ENCODE measurements at regions of chr1 and their contacts with region 1.

Region 1: GRCh38 chr1:11355559-11356475 is 82.8 kb downstream of the UBIAD1 start:
- DNase-seq: peak; percentile 51 to 95 (median 82)

Region 2: DNA sequence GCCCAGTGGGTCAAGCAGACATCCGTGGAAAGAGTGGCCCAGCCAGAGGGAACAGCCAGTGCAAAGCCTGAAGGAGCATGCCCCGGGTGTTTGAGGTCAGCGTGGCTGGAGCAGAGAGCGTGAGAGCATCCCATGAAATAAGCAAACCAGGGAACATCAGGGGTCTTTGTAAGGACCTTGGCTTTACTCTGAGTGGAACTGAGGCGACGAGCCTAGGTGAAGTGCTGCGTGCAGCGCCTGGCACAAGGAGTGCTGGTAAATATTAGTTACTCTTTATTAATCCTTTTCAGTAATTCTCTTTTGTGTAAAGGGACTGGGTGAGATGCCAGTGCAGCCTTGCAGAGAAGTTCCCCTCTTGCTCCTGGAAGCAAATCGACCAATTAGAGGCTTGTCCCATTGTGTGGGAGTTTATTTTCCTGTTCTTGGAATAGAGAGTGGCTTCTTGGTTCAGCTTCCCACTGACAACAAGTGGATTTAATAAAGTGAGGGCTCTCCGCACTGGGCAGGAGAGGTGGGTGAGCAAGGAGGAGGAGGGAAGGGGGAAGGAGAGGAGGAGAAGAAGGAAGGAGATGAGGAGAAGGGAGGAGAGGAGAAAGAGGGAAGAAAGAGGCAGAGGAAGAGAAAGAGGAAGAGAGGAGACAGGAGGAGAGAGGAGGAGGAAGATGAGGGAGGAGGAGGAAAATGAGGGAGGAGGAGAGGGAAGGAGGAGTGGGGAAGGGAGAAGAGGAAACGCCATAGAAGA is 85.6 kb after region 1 on chr1:
- intact Hi-C with region 1: loop called (anchors 1 kb)
- DNase-seq: peak in 7 of 10 donors; percentile 15 to 86 (median 34)

Measured in posterior cingulate gyrus (tissue), 11 donors.